Naive thymus-derived CD4-positive, alpha-beta T cell (primary cell): ENCODE measurements at regions of chr13 and their contacts with region 1.

Region 1: DNA sequence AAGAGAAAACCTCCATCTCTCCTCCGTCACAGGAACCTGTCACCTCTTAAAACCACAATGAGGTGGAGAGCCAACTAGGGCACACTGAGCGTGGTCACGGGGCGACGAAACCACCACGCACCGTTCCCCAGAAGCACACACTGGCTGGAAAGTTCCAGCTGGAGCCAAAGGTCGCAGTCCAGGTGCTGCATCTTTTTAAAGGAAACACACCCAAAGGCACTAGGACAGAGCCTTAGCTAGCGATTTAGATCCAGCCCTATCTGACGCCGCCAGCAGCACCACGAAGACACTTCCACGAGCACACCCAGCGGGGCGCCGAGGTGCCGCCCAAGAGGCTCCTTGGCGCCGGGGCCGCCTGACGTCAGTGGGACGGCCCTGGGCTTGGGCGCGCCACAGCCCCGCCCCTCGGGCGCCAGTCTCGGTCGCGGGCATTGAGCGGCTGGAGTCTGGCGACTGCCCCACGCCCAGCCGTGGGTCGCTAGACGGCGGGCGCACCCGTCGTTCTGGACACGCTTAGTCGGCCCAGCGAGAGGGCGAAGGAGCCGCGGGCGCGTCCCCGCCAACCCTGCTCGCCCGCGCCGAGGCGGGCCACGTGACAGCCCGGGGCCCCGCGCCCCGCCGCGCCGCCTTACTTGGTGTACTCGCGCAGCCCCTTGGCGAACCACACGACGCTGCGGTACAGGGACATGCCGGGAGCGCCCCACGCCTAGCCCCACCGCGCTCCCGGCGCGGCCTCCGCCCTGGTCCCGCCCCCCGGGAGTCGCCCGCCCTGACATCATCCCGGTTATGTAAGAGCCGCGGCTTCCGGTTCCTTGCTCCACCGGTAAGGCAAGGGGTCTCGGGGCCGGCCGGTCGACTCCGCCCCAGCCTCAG is at the start of gene DHRS12:
- DNase-seq: peak; percentile 83 to 93 (median 92)
- ATAC-seq: peak; percentile 83
- H3K4me3 ChIP-seq: peak within 1 kb of the TSS; percentile 81
- H3K4me3 Mint-ChIP-seq: peak within 1 kb of the TSS; percentile 84 to 99 (median 96)
- H3K27ac ChIP-seq: peak within 1 kb of the TSS; percentile 100
- H3K27ac Mint-ChIP-seq: peak within 1 kb of the TSS; percentile 99 to 100 (median 100)
- H3K4me1 ChIP-seq: peaks cover 29 to 32% of the 10 kb centered on the region in 2 donors
- H3K4me1 Mint-ChIP-seq: peaks cover 28 to 70% (median 52%) of the 10 kb centered on the region in 7 donors
- H3K27me3 ChIP-seq: no peaks in the 10 kb centered on the region
- H3K27me3 Mint-ChIP-seq: peaks cover 0 to 6% (median 0%) of the 10 kb centered on the region in 5 donors
- total RNA-seq, gene DHRS12: 6.7 to 25.3 (median 20.1) TPM

Region 2: GRCh38 chr13:50123862-50124536 is 1679.7 kb before region 1 on chr13:
- CTCF ChIA-PET with region 1: no interaction called
- POLR2A ChIA-PET with region 1: no interaction called
- intact Hi-C with region 1: loop called (anchors 1 to 10 kb)
- DNase-seq: peak in 7 of 9 donors; percentile 46 to 88 (median 64)
- ATAC-seq: peak; percentile 82
- H3K4me3 ChIP-seq: peak overlapping the region; percentile 52
- H3K4me3 Mint-ChIP-seq: peak overlapping the region; percentile 86 to 96 (median 93)
- H3K27ac ChIP-seq: peak overlapping the region; percentile 95
- H3K27ac Mint-ChIP-seq: peak overlapping the region; percentile 90 to 99 (median 97)
- H3K4me1 ChIP-seq: peaks cover 24 to 29% of the 10 kb centered on the region in 2 donors
- H3K4me1 Mint-ChIP-seq: peaks cover 25 to 61% (median 50%) of the 10 kb centered on the region in 7 donors
- H3K27me3 ChIP-seq: peaks cover 0 to 11% of the 10 kb centered on the region in 2 donors
- H3K27me3 Mint-ChIP-seq: peaks cover 1 to 15% (median 12%) of the 10 kb centered on the region in 5 donors

Region 3: GRCh38 chr13:51583875-51584730 is 219.6 kb before region 1 on chr13 and contains the start of gene WDFY2:
- CTCF ChIA-PET with region 1: no interaction called
- POLR2A ChIA-PET with region 1: interaction called, 10 read pairs
- intact Hi-C with region 1: loop called (anchors 1 kb)
- DNase-seq: peak; percentile 99 to 100 (median 100)
- ATAC-seq: peak; percentile 92
- H3K4me3 ChIP-seq: peak within 1 kb of the TSS; percentile 95
- H3K4me3 Mint-ChIP-seq: peak within 1 kb of the TSS; percentile 85 to 100 (median 98)
- H3K27ac ChIP-seq: peak within 1 kb of the TSS; percentile 88
- H3K27ac Mint-ChIP-seq: peak within 1 kb of the TSS; percentile 95 to 100 (median 98)
- H3K4me1 ChIP-seq: peaks cover 12 to 17% of the 10 kb centered on the region in 2 donors
- H3K4me1 Mint-ChIP-seq: peaks cover 26 to 47% (median 35%) of the 10 kb centered on the region in 7 donors
- H3K27me3 ChIP-seq: no peaks in the 10 kb centered on the region
- H3K27me3 Mint-ChIP-seq: peaks cover 0 to 3% (median 0%) of the 10 kb centered on the region in 5 donors
- total RNA-seq, gene WDFY2: 13.3 to 44.3 (median 21.1) TPM

Region 4: GRCh38 chr13:51764184-51765141 is 39.2 kb before region 1 on chr13:
- CTCF ChIA-PET with region 1: no interaction called
- POLR2A ChIA-PET with region 1: interaction called, 3 read pairs
- intact Hi-C with region 1: loop called in 1 of 2 experiments (anchors 5 kb)
- DNase-seq: peak in 8 of 9 donors; percentile 19 to 62 (median 44)
- ATAC-seq: peak; percentile 88
- H3K4me3 ChIP-seq: peak overlapping the region; percentile 49
- H3K4me3 Mint-ChIP-seq: peak overlapping the region; percentile 74 to 90 (median 85)
- H3K27ac ChIP-seq: peak overlapping the region; percentile 68
- H3K27ac Mint-ChIP-seq: peak overlapping the region; percentile 88 to 95 (median 93)
- H3K4me1 ChIP-seq: peaks cover 6 to 15% of the 10 kb centered on the region in 2 donors
- H3K4me1 Mint-ChIP-seq: peaks cover 10 to 38% (median 29%) of the 10 kb centered on the region in 7 donors
- H3K27me3 ChIP-seq: no peaks in the 10 kb centered on the region
- H3K27me3 Mint-ChIP-seq: no peaks in the 10 kb centered on the region

Region 5: DNA sequence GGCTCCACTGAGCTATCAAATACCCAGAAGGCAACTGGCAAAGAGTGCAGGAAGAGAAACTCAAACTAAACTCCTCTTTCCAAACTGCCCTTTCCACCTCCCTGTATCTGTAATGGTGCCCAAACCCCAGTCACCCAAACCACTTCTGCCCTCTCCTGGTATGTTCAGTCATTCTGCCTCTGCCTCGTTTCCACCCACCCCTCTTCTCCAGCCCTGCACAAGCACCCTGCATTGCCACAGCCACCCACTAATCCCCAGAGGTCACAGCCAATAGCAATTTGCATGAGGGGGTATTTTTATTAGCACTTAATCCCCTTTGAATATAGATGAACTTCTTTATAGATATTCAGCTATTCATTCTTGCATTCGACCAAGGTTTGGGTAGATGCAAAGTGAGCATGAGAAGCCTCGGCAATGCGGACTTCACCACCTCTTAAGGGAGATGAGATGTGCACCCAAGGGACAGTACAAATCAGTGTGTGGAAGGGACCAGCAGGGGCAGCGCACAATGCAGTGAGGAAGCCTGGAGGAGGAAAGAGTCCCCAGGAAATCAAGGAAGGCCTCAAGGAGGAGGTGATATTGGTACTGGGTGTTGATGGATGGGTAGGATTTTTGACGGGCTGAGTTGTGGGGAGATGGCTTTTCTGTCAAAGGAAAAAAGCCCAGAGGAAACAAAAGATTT is 29.0 kb after region 1 on chr13:
- CTCF ChIA-PET with region 1: interaction called, 21 read pairs
- POLR2A ChIA-PET with region 1: interaction called, 324 read pairs
- intact Hi-C with region 1: loop called in 1 of 2 experiments (anchors 5 kb)
- DNase-seq: peak in 7 of 9 donors; percentile 68 to 82 (median 76)
- ATAC-seq: peak; percentile 98
- H3K4me3 ChIP-seq: no peak overlapping the region
- H3K4me3 Mint-ChIP-seq: peak overlapping the region in 9 of 10 donors; percentile 37 to 77 (median 55)
- H3K27ac ChIP-seq: no peak overlapping the region
- H3K27ac Mint-ChIP-seq: peak overlapping the region in 8 of 9 donors; percentile 68 to 99 (median 78)
- H3K4me1 ChIP-seq: peaks cover 4 to 33% of the 10 kb centered on the region in 2 donors
- H3K4me1 Mint-ChIP-seq: peaks cover 28 to 54% (median 51%) of the 10 kb centered on the region in 7 donors
- H3K27me3 ChIP-seq: no peaks in the 10 kb centered on the region
- H3K27me3 Mint-ChIP-seq: peaks cover 0 to 8% (median 0%) of the 10 kb centered on the region in 5 donors

Region 6: GRCh38 chr13:52450012-52450792 is 646.5 kb after region 1 on chr13 and contains the start of gene VPS36:
- CTCF ChIA-PET with region 1: no interaction called
- POLR2A ChIA-PET with region 1: no interaction called
- intact Hi-C with region 1: loop called (anchors 1 to 5 kb)
- DNase-seq: peak; percentile 85 to 99 (median 95)
- ATAC-seq: peak; percentile 85
- H3K4me3 ChIP-seq: peak within 1 kb of the TSS; percentile 92
- H3K4me3 Mint-ChIP-seq: peak within 1 kb of the TSS; percentile 80 to 98 (median 94)
- H3K27ac ChIP-seq: peak within 1 kb of the TSS; percentile 88
- H3K27ac Mint-ChIP-seq: peak within 1 kb of the TSS; percentile 58 to 96 (median 90)
- H3K4me1 ChIP-seq: peaks cover 26 to 27% of the 10 kb centered on the region in 2 donors
- H3K4me1 Mint-ChIP-seq: peaks cover 17 to 52% (median 45%) of the 10 kb centered on the region in 7 donors
- H3K27me3 ChIP-seq: no peaks in the 10 kb centered on the region
- H3K27me3 Mint-ChIP-seq: peaks cover 0 to 3% (median 0%) of the 10 kb centered on the region in 5 donors
- total RNA-seq, gene VPS36: 40.4 to 53.7 (median 49.5) TPM